ENCODE measurements at regions of chr4 and their contacts with region 1.

Region 1: GRCh38 chr4:113761620-113762185 is at the start of gene CAMK2D:
- DNase-seq: peak; percentile 85
- H3K4me3 ChIP-seq: peak within 1 kb of the TSS; percentile 77 to 78 (median 78)
- H3K27ac ChIP-seq: peak within 1 kb of the TSS; percentile 95
- H3K4me1 ChIP-seq: peaks cover 8% of the 10 kb centered on the region
- H3K27me3 ChIP-seq: no peaks in the 10 kb centered on the region
- CTCF ChIP-seq: peak; percentile 14 to 83
- total RNA-seq, gene CAMK2D: 36.3 to 63.8 TPM

Region 2: GRCh38 chr4:113292371-113293042 is 469.2 kb before region 1 on chr4:
- CTCF ChIA-PET with region 1: no interaction called
- dilution Hi-C with region 1: no loop called
- in situ Hi-C with region 1: no loop called
- intact Hi-C with region 1: loop called (anchors 5 kb)
- DNase-seq: no peak
- H3K4me3 ChIP-seq: no peak overlapping the region
- H3K27ac ChIP-seq: no peak overlapping the region
- H3K4me1 ChIP-seq: no peaks in the 10 kb centered on the region
- H3K27me3 ChIP-seq: no peaks in the 10 kb centered on the region
- CTCF ChIP-seq: no peak

Region 3: GRCh38 chr4:113435893-113436292 is 325.8 kb before region 1 on chr4:
- CTCF ChIA-PET with region 1: no interaction called
- dilution Hi-C with region 1: no loop called
- in situ Hi-C with region 1: no loop called
- intact Hi-C with region 1: loop called (anchors 1 kb)
- DNase-seq: peak; percentile 96
- H3K4me3 ChIP-seq: no peak overlapping the region
- H3K27ac ChIP-seq: peak overlapping the region; percentile 69
- H3K4me1 ChIP-seq: peaks cover 25% of the 10 kb centered on the region
- H3K27me3 ChIP-seq: no peaks in the 10 kb centered on the region
- CTCF ChIP-seq: no peak

Region 4: GRCh38 chr4:113539408-113539807 is 222.3 kb before region 1 on chr4:
- CTCF ChIA-PET with region 1: no interaction called
- dilution Hi-C with region 1: no loop called
- in situ Hi-C with region 1: loop called in 1 of 2 experiments (anchors 5 kb)
- intact Hi-C with region 1: no loop called
- DNase-seq: peak; percentile 39
- H3K4me3 ChIP-seq: no peak overlapping the region
- H3K27ac ChIP-seq: no peak overlapping the region
- H3K4me1 ChIP-seq: no peaks in the 10 kb centered on the region
- H3K27me3 ChIP-seq: no peaks in the 10 kb centered on the region
- CTCF ChIP-seq: no peak

Region 5: GRCh38 chr4:113673450-113673849 is 88.3 kb before region 1 on chr4:
- CTCF ChIA-PET with region 1: no interaction called
- dilution Hi-C with region 1: no loop called
- in situ Hi-C with region 1: no loop called
- intact Hi-C with region 1: loop called (anchors 5 kb)
- DNase-seq: peak; percentile 76
- H3K4me3 ChIP-seq: no peak overlapping the region
- H3K27ac ChIP-seq: no peak overlapping the region
- H3K4me1 ChIP-seq: peaks cover 15% of the 10 kb centered on the region
- H3K27me3 ChIP-seq: no peaks in the 10 kb centered on the region
- CTCF ChIP-seq: peak in 1 of 2 donors; percentile 20

Region 6: GRCh38 chr4:113708250-113708649 is 53.5 kb before region 1 on chr4:
- CTCF ChIA-PET with region 1: no interaction called
- dilution Hi-C with region 1: no loop called
- in situ Hi-C with region 1: no loop called
- intact Hi-C with region 1: no loop called
- DNase-seq: no peak
- H3K4me3 ChIP-seq: no peak overlapping the region
- H3K27ac ChIP-seq: no peak overlapping the region
- H3K4me1 ChIP-seq: no peaks in the 10 kb centered on the region
- H3K27me3 ChIP-seq: no peaks in the 10 kb centered on the region
- CTCF ChIP-seq: no peak

Region 7: GRCh38 chr4:113979148-113979904 is 217.6 kb after region 1 on chr4 and contains the start of gene ARSJ:
- CTCF ChIA-PET with region 1: no interaction called
- dilution Hi-C with region 1: no loop called
- in situ Hi-C with region 1: no loop called
- intact Hi-C with region 1: loop called (anchors 1 kb)
- DNase-seq: peak; percentile 82
- H3K4me3 ChIP-seq: peak within 1 kb of the TSS; percentile 58 to 97 (median 90)
- H3K27ac ChIP-seq: peak within 1 kb of the TSS; percentile 94
- H3K4me1 ChIP-seq: peaks cover 14% of the 10 kb centered on the region
- H3K27me3 ChIP-seq: no peaks in the 10 kb centered on the region
- CTCF ChIP-seq: no peak
- total RNA-seq, gene ARSJ: 35.8 to 39.8 TPM

Region 8: GRCh38 chr4:114378306-114378903 is 616.7 kb after region 1 on chr4:
- CTCF ChIA-PET with region 1: interaction called, 3 read pairs
- dilution Hi-C with region 1: no loop called
- in situ Hi-C with region 1: no loop called
- intact Hi-C with region 1: loop called (anchors 5 kb)
- DNase-seq: peak; percentile 32
- H3K4me3 ChIP-seq: no peak overlapping the region
- H3K27ac ChIP-seq: no peak overlapping the region
- H3K4me1 ChIP-seq: peaks cover 6% of the 10 kb centered on the region
- H3K27me3 ChIP-seq: no peaks in the 10 kb centered on the region
- CTCF ChIP-seq: peak; percentile 73 to 74